ENCODE measurements at regions of chr3 and their contacts with region 1.

Region 1: DNA sequence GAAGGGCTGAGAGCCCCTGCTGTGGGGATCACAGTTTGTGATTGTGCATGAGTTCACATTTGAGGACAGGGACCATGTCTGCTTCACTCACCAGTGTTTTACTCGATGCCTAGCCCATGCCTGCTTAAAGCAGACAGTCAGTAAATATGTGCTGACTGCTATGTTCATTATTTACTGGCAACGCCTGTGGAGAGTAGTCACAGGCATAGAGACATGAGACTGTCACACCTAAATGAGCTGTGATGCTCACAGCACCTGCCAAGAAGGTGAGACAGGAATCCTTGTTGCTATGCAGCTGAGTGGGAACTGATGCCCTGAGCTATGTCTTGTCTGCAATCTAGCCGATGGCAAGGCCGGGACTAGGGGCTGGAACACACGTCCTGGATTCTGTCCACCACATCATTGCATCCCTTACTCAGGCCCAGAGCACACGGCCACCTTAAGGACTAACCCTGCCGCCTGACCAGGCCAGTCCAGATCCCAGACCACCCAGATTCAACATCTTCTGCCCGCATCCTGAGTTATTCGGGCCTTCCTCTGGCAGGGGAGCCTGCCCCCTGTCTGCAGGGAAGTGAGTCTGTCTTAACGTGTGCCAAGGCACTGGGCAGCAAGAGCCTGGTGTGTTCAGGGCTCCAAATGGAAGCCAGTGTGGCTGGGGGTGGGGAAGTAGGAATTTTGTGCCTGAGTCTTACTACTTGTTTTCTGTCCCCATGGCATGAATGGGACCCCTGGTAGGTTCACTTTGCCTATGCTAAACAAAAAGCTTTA is 44.8 kb downstream of the FGD5 start:
- DNase-seq: no peak
- ATAC-seq: no peak
- H3K4me3 ChIP-seq: no peak overlapping the region
- H3K27ac ChIP-seq: peak overlapping the region in 9 of 12 donors; percentile 13 to 81 (median 68)
- H3K4me1 ChIP-seq: peaks cover 6 to 53% (median 34%) of the 10 kb centered on the region in 12 donors
- H3K27me3 ChIP-seq: no peaks in the 10 kb centered on the region
- CTCF ChIP-seq: peak in 10 of 12 donors; percentile 10 to 45 (median 30)
- POLR2A ChIP-seq: no peak

Region 2: DNA sequence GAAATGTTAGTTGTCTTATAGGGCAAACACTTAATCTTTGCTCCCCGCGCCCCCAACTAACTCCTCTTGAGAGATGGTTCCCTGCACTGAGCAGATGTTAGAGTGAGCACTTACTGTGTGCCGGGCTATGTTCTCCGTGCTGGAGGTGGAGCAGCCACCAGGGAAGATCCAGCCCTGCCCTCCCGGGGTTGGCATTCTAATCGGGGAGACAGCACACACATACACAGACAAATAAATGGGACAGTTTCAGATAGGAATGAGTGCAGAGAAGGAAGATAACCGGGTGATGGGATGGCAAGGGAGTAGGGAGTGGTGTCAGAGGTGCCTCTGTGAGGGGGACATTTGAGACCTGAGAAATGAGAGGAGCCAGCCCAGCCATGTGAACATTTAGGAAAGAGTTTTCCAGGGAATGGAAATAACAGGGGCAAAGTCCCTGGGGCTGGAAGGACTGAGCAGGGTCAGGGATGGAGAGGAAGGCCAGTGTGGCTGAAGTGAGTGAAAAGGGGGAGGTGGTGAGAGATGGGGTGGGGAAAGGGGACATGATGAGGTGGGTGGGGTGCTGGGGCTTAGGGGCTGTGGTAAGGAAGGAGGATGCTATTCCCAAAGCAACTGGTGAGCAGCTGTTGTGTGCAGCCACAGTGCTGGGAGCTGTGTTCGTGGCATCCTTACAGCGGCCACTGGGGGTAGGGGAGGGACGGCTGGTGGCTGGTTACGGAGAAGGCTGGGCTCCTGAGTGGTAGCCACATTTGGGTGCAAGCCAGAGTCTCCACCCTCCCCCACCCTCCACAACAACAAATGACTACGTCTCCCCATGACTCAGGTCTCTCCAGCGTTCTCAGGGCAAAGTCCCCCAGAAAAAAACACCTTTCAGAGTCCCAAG is 60.2 kb before region 1 on chr3:
- intact Hi-C with region 1: loop called in 1 of 10 experiments (anchors 5 kb)
- DNase-seq: peak in 1 of 5 donors; percentile 59
- ATAC-seq: peak; percentile 57 to 64 (median 58)
- H3K4me3 ChIP-seq: no peak overlapping the region
- H3K27ac ChIP-seq: peak overlapping the region; percentile 14 to 90 (median 74)
- H3K4me1 ChIP-seq: peaks cover 3 to 45% (median 32%) of the 10 kb centered on the region in 12 donors
- H3K27me3 ChIP-seq: peaks cover 0 to 9% (median 0%) of the 10 kb centered on the region in 9 donors
- CTCF ChIP-seq: peak in 1 of 12 donors; percentile 9
- POLR2A ChIP-seq: no peak

Region 3: GRCh38 chr3:14810070-14810784 is 53.3 kb before region 1 on chr3:
- intact Hi-C with region 1: loop called in 3 of 10 experiments (anchors 5 kb)
- DNase-seq: peak; percentile 61 to 73 (median 65)
- ATAC-seq: peak; percentile 56 to 77 (median 69)
- H3K4me3 ChIP-seq: peak overlapping the region; percentile 56 to 95 (median 77)
- H3K27ac ChIP-seq: peak overlapping the region; percentile 79 to 97 (median 90)
- H3K4me1 ChIP-seq: peaks cover 3 to 67% (median 38%) of the 10 kb centered on the region in 12 donors
- H3K27me3 ChIP-seq: peaks cover 0 to 35% (median 11%) of the 10 kb centered on the region in 9 donors
- CTCF ChIP-seq: no peak
- POLR2A ChIP-seq: no peak

Region 4: DNA sequence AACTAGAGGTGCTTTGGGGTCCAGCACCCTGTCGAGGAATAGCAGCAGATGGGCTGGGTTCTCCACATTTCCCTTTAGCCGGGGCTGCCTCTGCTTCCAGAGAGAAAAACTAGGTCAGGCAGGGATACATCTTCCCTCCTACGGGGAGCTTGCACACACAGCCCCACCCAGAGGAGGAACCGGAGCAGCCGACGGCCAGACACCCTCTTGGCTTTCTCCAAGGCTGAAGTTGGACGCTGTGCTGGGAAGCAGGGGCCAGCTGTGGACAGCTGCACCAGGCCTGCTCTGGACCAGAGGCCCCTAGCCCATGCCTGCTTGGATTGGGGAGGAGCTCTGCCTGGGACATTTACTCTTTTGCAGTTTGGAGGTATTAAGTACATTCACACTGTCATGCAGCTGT is 39.2 kb after region 1 on chr3:
- intact Hi-C with region 1: loop called in 1 of 10 experiments (anchors 5 kb)
- DNase-seq: peak; percentile 76 to 87 (median 87)
- ATAC-seq: peak; percentile 87 to 96 (median 92)
- H3K4me3 ChIP-seq: no peak overlapping the region
- H3K27ac ChIP-seq: peak overlapping the region in 5 of 12 donors; percentile 25 to 47 (median 34)
- H3K4me1 ChIP-seq: peaks cover 0 to 27% (median 12%) of the 10 kb centered on the region in 12 donors
- H3K27me3 ChIP-seq: no peaks in the 10 kb centered on the region
- CTCF ChIP-seq: peak in 5 of 12 donors; percentile 13 to 41 (median 25)
- POLR2A ChIP-seq: no peak